Heart left ventricle (tissue), 16 donors: ENCODE measurements at regions of chr7 and their contacts with region 1.

Region 1: DNA sequence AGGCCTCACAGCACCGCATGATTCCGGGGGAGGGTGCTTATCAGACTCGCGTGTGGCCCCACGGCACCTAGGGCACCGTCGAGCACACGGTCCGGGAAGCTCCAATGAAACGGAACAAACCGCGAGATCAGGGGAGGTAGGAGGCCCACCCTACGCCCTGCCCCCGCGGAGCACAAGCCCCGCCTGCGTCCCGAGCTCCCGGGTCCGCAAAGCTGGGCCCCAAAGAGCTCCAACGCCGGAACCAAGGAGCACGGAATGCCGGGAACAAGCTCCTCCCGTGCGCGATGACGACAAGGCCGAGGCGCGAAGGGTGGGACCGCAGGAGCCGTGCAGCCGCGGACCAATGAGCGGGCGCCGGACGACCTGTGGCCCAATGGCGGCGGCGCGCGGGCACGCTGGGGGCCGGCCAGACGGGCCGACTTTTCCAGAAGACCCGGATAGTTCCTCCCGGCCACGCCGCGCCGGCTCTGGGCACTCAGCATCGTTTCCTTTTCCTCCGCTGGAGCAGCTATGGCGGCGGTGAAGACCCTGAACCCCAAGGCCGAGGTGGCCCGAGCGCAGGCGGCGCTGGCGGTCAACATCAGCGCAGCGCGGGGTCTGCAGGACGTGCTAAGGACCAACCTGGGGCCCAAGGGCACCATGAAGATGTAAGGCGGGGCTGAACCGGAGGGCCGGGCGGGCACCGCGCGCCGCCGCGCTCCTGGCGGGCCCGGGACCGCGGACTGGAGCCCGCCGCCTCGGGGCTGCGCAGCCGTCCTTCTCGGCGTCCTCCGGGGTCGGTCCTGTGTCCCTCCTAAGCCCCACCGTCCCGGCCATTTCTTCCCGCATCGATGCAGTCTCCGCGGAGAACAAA is at the starts of genes CCT6A and PSPH:
- DNase-seq: peak; percentile 98 to 99 (median 99)
- ATAC-seq: peak; percentile 98 to 100 (median 100)
- H3K4me3 ChIP-seq: peak within 1 kb of the TSS; percentile 50 to 96 (median 82)
- H3K27ac ChIP-seq: peak within 1 kb of the TSS; percentile 80 to 96 (median 92)
- H3K4me1 ChIP-seq: peaks cover 7 to 45% (median 26%) of the 10 kb centered on the region in 12 donors
- H3K27me3 ChIP-seq: no peaks in the 10 kb centered on the region
- CTCF ChIP-seq: no peak
- POLR2A ChIP-seq: peak; percentile 23 to 81
- total RNA-seq, gene CCT6A: 44.6 to 85.8 (median 62.6) TPM
- total RNA-seq, gene PSPH: 7.5 to 15.9 (median 8.9) TPM

Region 2: DNA sequence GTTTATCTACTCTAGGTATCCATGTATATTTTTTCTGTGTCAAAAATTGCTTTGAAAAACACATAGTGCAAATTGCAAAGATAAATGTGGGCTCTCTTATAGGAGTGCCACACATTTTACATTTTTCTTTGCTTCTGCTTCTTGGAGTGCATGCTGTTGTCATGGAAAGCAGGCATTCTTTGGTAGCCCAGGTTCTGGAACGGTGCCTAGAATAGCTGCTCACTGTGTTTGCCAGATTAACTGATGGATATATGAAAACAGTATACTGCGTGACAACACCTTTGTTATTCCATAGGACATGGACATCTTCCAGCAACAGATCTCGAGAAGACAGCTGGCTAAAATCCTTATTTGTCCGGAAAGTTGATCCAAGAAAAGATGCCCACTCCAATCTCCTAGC is 73.7 kb before region 1 on chr7:
- intact Hi-C with region 1: loop called in 1 of 10 experiments (anchors 5 kb)
- DNase-seq: no peak
- ATAC-seq: no peak
- H3K4me3 ChIP-seq: no peak overlapping the region
- H3K27ac ChIP-seq: peak overlapping the region in 7 of 12 donors; percentile 28 to 84 (median 44)
- H3K4me1 ChIP-seq: peaks cover 0 to 33% (median 12%) of the 10 kb centered on the region in 12 donors
- H3K27me3 ChIP-seq: no peaks in the 10 kb centered on the region
- CTCF ChIP-seq: no peak
- POLR2A ChIP-seq: no peak

Region 3: DNA sequence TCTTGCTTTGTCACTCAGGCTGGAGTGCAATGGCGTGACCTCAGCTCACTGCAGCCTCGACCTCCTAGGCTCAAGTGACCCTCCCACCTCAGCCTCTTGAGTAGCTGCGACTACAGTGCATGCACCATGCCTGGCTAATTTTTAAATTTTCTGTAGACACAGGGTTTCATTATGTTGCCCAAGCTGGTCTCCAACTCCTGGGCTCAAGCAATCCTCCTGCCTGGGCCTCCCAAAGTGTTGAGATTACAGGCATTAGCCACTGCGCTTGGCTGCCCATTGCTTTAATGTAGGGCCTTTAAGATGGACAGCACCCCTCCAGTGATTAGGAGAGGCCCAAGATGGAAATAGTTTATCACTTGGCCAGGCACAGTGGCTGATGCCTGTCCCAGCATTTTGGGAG is 47.8 kb before region 1 on chr7:
- intact Hi-C with region 1: loop called in 2 of 10 experiments (anchors 5 kb)
- DNase-seq: no peak
- ATAC-seq: no peak
- H3K4me3 ChIP-seq: no peak overlapping the region
- H3K27ac ChIP-seq: no peak overlapping the region
- H3K4me1 ChIP-seq: peaks cover 0 to 6% (median 0%) of the 10 kb centered on the region in 12 donors
- H3K27me3 ChIP-seq: no peaks in the 10 kb centered on the region
- CTCF ChIP-seq: no peak
- POLR2A ChIP-seq: no peak